ENCODE measurements at regions of chr17 and their contacts with region 1.

Region 1: DNA sequence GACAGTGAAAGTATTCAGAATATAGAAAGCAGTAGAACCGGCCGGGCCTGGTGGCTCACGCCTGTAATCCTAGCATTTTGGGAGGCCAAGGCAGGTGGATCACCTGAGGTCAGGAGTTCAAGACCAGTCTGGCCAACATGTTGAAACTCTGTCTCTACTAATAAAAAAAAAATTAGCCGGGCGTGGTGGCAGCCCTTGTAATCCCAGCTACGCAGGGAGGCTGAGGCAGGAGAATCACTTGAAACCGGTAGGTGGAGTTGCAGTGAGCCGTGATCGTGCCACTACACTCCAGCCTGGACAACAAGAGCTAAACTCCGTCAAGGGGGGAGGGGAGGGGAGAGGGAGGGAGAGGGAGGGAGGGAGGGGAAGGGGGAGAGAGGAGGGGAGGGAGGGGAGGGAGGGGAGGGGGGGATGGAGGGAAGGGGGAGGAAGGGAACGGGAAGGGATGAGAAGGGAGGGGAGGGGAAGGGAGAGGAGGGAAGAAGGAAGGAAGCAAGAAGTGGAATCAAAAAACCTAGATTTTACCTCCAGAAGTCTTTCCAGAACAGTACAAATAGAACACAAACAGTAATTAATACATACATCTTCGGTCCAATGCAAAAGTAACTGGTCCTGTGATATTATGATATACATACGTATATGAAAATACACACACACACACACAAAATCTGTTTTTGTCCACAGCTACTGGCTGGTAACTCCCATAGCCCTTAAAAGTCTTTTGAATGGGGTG is 10.9 kb upstream of the NT5C start:
- DNase-seq: no peak
- ATAC-seq: no peak
- H3K4me3 ChIP-seq: no peak overlapping the region
- H3K4me3 Mint-ChIP-seq: no peak overlapping the region
- H3K27ac ChIP-seq: no peak overlapping the region
- H3K27ac Mint-ChIP-seq: no peak overlapping the region
- H3K4me1 ChIP-seq: peaks cover 15% of the 10 kb centered on the region
- H3K4me1 Mint-ChIP-seq: peaks cover 16% of the 10 kb centered on the region
- H3K27me3 ChIP-seq: no peaks in the 10 kb centered on the region
- H3K27me3 Mint-ChIP-seq: no peaks in the 10 kb centered on the region
- CTCF ChIP-seq: no peak

Region 2: DNA sequence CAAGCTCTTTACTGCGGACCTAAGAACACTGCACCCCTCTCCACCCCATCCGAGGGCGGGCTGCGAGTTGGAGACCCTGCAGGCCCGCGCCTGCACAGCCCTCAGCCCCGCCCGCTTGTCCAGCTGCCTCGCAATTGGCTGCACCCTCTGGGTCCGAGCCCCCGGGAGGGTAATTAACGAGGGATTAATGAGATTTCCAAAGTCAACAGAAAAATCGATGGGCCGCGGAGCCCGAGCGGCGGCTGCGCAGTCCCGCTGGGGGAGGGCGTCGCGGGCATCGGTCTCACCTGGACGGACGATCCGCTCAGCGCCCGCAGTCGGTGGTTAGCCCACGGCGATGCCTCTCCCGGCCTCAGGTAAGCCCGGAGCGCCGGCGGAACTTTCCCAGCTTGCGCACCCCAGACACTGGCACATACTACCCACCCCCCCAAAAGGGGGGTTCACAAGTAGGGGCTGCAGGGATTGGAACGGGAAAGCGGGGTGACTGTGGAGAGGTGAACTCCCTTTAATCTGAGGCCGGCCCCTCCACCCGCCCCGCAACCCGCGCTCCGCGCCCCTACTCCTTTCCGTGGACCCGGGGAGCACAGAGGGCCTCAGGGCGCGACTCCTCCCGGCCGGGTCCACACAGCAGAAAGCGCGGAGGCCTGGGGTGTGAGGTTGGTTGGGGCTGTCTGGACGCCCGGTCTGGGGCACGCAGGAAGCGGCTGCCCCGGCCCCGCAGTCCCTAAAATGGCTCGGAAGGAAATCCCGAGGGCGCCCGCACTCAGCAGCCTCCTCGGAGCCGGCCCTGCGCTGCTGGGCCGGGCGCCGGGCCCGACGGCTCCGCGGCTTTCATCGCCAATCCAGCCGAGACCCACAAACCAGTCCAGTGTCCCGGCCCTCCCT is 206.6 kb before region 1 on chr17 and contains the start of gene OTOP3:
- CTCF ChIA-PET with region 1: no interaction called
- POLR2A ChIA-PET with region 1: no interaction called
- intact Hi-C with region 1: no loop called
- DNase-seq: no peak
- ATAC-seq: no peak
- H3K4me3 ChIP-seq: no peak within 1 kb of the TSS
- H3K4me3 Mint-ChIP-seq: no peak within 1 kb of the TSS
- H3K27ac ChIP-seq: no peak within 1 kb of the TSS
- H3K27ac Mint-ChIP-seq: no peak within 1 kb of the TSS
- H3K4me1 ChIP-seq: peaks cover 9% of the 10 kb centered on the region
- H3K4me1 Mint-ChIP-seq: no peaks in the 10 kb centered on the region
- H3K27me3 ChIP-seq: peaks cover 51 to 58% of the 10 kb centered on the region in 2 experiments
- H3K27me3 Mint-ChIP-seq: peaks cover 78% of the 10 kb centered on the region
- CTCF ChIP-seq: no peak
- total RNA-seq, gene OTOP3: not detected

Region 3: DNA sequence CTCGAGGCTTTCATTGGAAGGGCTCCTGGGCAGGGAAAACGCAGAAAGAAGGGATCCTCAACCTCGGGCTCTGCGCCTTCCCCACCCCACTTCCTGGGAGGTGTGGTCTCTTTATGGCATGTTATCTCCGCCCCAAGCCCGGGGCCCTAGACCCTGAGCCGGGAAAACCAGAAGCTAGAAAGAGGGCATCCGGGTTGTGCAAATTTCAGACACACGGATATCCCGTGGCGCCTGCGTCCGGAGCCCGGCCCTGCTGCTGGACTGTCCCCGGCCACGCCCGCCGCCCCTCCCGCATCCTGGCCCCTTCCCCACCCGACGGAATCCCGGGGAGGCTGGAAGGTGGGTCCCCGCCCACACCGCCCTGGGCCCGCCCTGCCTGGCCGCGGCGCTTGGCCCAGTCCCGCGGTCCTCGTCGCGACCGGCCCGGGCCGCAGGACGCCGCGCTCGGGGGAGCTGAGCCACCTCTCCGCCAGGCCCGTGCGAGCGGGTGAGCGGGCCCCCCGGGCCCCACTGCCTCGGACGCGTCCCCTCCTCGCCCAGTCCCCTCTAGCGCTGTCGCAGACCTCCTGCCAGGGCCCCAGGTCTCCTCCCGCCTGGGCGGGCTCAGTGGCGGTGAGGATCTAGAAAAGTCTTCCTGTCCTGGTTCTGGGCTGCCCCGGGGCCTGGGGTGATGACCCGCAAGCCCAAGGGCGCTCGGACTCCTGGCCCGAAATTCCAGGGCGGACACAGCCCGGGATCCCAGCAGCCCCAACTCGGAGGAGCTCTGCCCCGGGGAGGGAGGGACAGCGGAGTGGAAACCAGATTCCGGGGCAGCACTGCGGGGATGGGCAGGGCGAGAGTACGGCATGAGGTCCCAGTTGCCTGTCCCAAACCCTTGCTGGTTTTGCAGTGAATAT is 54.6 kb before region 1 on chr17 and contains the start of gene SLC16A5:
- CTCF ChIA-PET with region 1: no interaction called
- POLR2A ChIA-PET with region 1: no interaction called
- intact Hi-C with region 1: no loop called
- DNase-seq: peak in 11 of 14 experiments; percentile 28 to 72 (median 53)
- ATAC-seq: peak; percentile 72
- H3K4me3 ChIP-seq: peak within 1 kb of the TSS; percentile 74
- H3K4me3 Mint-ChIP-seq: peak within 1 kb of the TSS; percentile 91
- H3K27ac ChIP-seq: peak within 1 kb of the TSS; percentile 41 to 53
- H3K27ac Mint-ChIP-seq: peak within 1 kb of the TSS; percentile 87
- H3K4me1 ChIP-seq: peaks cover 47% of the 10 kb centered on the region
- H3K4me1 Mint-ChIP-seq: peaks cover 63% of the 10 kb centered on the region
- H3K27me3 ChIP-seq: no peaks in the 10 kb centered on the region
- H3K27me3 Mint-ChIP-seq: no peaks in the 10 kb centered on the region
- CTCF ChIP-seq: no peak
- total RNA-seq, gene SLC16A5: 9.2 to 11.0 TPM

Region 4: DNA sequence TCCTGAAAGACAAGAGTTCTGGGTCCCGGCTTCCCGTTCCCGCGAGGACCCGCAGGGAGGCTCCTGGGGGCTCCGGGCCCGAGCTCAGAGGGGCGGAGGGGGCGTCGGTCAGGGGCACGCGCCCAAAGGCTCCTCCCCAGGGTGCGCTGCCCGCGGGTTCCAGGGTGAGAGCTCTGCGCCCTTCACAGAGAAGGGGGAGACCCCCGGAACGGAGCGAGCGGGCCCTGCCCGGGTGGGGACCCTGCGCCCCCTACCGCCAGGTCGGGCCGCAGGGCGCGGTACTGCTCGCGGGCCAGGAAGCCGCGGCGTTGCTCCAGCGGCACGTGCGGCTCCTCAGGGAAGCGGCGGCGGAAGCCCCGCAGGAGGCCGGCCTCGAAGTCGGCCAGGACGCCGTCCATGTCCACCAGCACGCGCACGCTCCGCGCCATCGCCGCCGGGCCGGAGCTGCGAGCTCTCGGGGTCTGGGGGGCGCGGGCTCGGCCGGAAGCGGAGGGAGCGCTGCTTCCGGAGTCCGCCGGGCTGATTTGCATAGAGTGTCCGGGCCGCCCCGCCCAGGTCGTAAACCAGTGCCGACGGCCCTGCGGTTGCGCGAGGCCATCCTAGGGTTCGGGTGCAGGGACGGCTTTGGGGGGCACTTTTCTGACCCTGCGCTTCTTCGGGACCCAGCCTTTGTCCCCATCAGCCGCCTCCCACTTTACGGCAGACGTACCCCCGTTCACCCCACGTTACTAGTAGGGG is 11.0 kb before region 1 on chr17 and contains the start of gene NT5C:
- CTCF ChIA-PET with region 1: interaction called, 9 read pairs
- POLR2A ChIA-PET with region 1: interaction called, 12 read pairs
- intact Hi-C with region 1: no loop called
- DNase-seq: peak in 10 of 14 experiments; percentile 44 to 78 (median 56)
- ATAC-seq: peak; percentile 72
- H3K4me3 ChIP-seq: peak within 1 kb of the TSS; percentile 83
- H3K4me3 Mint-ChIP-seq: peak within 1 kb of the TSS; percentile 88
- H3K27ac ChIP-seq: peak within 1 kb of the TSS; percentile 45 to 55
- H3K27ac Mint-ChIP-seq: peak within 1 kb of the TSS; percentile 70
- H3K4me1 ChIP-seq: peaks cover 21% of the 10 kb centered on the region
- H3K4me1 Mint-ChIP-seq: peaks cover 7% of the 10 kb centered on the region
- H3K27me3 ChIP-seq: no peaks in the 10 kb centered on the region
- H3K27me3 Mint-ChIP-seq: no peaks in the 10 kb centered on the region
- CTCF ChIP-seq: peak; percentile 70
- total RNA-seq, gene NT5C: 14.1 to 16.1 TPM

Region 5: GRCh38 chr17:75154195-75155106 is 12.0 kb after region 1 on chr17 and contains the start of gene JPT1:
- CTCF ChIA-PET with region 1: no interaction called
- POLR2A ChIA-PET with region 1: interaction called, 11 read pairs
- intact Hi-C with region 1: no loop called
- DNase-seq: peak; percentile 94 to 99 (median 98)
- ATAC-seq: peak; percentile 97
- H3K4me3 ChIP-seq: peak within 1 kb of the TSS; percentile 96
- H3K4me3 Mint-ChIP-seq: peak within 1 kb of the TSS; percentile 97
- H3K27ac ChIP-seq: peak within 1 kb of the TSS; percentile 45 to 48
- H3K27ac Mint-ChIP-seq: peak within 1 kb of the TSS; percentile 79
- H3K4me1 ChIP-seq: peaks cover 32% of the 10 kb centered on the region
- H3K4me1 Mint-ChIP-seq: peaks cover 32% of the 10 kb centered on the region
- H3K27me3 ChIP-seq: no peaks in the 10 kb centered on the region
- H3K27me3 Mint-ChIP-seq: no peaks in the 10 kb centered on the region
- CTCF ChIP-seq: no peak
- total RNA-seq, gene JPT1: 21.3 to 25.5 TPM